Common myeloid progenitor, CD34-positive (primary cell): ENCODE measurements at regions of chr11 and their contacts with region 1.

Region 1: GRCh38 chr11:82718307-82718706 is 15.4 kb downstream of the FAM181B start:
- DNase-seq: peak; percentile 26 to 61 (median 58)
- H3K4me3 ChIP-seq: no peak overlapping the region
- H3K27ac ChIP-seq: no peak overlapping the region
- H3K4me1 ChIP-seq: no peaks in the 10 kb centered on the region
- H3K27me3 ChIP-seq: peaks cover 0 to 2% (median 0%) of the 10 kb centered on the region in 5 experiments

Region 2: DNA sequence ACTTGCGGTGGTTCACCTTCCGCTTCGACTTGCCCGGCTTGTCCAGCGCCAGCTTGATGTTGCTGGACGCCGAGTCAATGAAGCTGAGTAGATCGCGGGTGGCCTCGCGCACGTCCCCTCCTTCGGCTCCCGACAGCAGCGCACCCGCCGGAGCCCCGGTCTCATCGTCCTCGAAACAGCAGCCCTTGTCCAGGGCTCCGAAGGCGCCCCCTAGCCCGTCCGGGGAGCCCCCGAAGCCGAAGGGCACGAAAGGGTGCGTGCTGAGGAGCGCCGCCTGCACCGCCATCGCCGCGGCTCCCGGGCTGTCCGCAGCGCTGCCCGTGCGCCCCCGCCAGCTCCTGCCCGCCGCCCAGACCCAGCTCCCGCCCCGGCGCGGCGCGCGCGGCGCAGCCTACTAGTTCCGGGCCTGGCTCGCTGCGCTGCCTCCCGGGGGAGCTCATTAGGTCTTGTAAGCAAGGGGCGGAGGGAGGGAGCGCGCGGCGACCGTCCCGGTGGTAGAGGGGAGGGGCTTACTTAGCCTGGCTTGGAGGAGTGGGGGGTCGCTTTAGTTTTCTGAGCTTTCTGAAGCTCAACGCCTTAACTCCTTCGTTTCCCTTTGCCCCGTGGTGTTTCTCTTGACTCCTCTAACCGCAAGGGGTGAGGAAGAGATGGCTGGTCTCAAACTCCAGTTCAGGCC is 15.3 kb after region 1 on chr11 and contains the start of gene FAM181B:
- CTCF ChIA-PET with region 1: interaction called, 51 read pairs
- POLR2A ChIA-PET with region 1: no interaction called
- DNase-seq: peak; percentile 68 to 85 (median 76)
- H3K4me3 ChIP-seq: peak within 1 kb of the TSS; percentile 35 to 79 (median 56)
- H3K27ac ChIP-seq: no peak within 1 kb of the TSS
- H3K4me1 ChIP-seq: peaks cover 0 to 14% (median 9%) of the 10 kb centered on the region in 4 experiments
- H3K27me3 ChIP-seq: peaks cover 9 to 52% (median 27%) of the 10 kb centered on the region in 5 experiments

Region 3: DNA sequence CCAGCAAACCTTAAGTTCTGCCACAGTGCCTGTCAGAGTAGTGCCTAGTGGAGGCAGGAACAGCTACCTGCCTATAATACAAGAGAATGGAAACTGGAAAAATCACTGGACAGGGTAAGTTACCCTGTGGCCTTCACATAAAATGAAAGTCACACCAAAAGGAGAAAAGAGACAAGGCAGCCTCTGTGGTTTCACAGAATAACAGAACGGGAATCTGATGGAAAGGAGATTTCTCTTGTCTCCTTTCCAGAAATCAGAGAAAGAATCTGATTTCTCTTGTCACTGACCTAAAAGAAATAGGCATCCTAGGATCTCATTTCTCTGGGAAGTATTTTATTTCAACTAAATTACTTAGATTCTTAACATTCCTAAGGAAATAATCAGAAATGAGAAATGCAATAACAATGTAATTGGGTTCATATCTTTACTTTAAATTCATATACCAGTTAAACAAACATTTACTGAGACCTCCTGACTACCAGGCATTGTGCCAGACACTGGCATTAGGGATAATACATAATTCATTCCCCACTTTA is 140.3 kb after region 1 on chr11:
- CTCF ChIA-PET with region 1: interaction called, 41 read pairs
- POLR2A ChIA-PET with region 1: no interaction called
- DNase-seq: no peak
- H3K4me3 ChIP-seq: no peak overlapping the region
- H3K27ac ChIP-seq: no peak overlapping the region
- H3K4me1 ChIP-seq: no peaks in the 10 kb centered on the region
- H3K27me3 ChIP-seq: no peaks in the 10 kb centered on the region